ENCODE measurements at regions of chr16 and their contacts with region 1.

Region 1: GRCh38 chr16:52068447-52069074 is 478.4 kb downstream of the TOX3 start:
- DNase-seq: peak in 7 of 10 donors; percentile 10 to 86 (median 51)

Region 2: GRCh38 chr16:52128361-52128760 is 59.8 kb after region 1 on chr16:
- intact Hi-C with region 1: loop called (anchors 2 kb)
- DNase-seq: peak in 6 of 10 donors; percentile 2 to 84 (median 16)

Region 3: DNA sequence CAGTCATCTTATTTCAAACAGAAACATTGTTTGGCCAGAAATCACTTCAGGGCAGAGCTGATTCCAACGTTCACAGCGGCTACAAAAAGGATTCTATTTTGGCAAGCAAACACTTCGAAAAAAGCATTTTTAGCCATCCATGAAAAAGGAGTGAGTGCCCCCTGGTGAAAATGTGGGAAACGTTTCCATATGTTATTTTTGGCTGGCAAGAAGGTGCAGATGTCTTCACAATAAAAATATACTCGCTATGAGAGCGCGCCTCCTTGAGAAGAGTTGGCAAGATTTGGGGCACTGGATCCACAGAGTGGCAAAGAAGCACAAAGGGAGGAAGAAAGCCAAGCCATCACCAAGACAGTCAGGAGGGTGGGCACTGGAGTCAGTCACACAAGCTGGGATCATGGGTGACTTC is 793.1 kb after region 1 on chr16:
- intact Hi-C with region 1: loop called (anchors 5 kb)
- DNase-seq: peak in 3 of 10 donors; percentile 5 to 22 (median 9)

Region 4: GRCh38 chr16:52912565-52913173 is 844.1 kb after region 1 on chr16:
- intact Hi-C with region 1: loop called (anchors 2 kb)
- DNase-seq: peak; percentile 48 to 96 (median 78)

Region 5: DNA sequence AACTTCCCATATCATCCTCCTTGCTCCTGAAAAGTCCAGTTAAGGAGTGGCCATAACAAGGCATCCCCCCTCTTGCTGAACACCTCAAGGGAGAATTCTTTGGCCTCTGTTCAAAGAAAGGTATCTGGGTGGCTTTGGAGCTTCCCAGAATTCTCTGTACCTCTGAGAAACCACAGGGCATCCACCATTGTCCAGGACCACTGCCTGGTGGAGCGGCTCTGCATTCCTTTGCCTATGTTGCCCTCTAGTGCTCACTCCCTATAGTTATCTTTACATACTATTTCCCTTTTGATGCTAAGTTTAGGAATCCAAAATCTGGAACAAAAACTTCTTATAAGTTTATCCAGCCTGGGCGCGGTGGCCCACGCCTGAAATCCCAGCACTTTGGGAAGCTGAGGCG is 953.8 kb after region 1 on chr16:
- intact Hi-C with region 1: loop called (anchors 2 kb)
- DNase-seq: peak in 8 of 10 donors; percentile 20 to 87 (median 44)

Measured in posterior cingulate gyrus (tissue), 11 donors.